IMR-90 (cell line): ENCODE measurements at regions of chr13 and their contacts with region 1.

Region 1: DNA sequence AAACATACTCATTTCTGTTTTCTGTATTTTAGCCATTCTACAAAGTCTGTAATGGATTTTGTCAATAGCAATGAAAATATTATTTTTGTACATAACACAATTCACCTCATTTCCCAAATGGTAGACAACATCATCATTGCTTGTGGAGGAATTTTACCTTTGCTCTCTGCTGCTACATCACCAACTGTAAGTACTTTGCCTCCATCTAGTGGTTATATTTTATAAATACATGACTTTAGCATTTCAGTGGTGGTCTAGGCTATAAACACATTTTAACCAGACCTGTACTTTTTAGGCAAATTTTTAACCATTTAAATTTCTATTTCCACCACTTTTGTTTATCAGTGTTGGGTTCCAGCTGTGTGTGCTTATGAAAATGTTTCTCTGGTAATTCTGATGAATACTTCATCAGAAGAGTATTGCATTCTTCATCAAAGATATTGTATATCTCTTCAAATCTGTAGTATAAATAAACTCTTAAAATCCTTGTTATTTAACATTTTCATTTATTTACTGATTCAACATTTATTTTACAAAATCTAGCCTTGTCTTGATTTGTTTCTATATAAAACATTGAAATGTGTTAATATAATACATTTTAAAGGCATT is 222.4 kb downstream of the NBEA start:
- DNase-seq: peak; percentile 27
- ATAC-seq: peak; percentile 78
- H3K4me3 ChIP-seq: no peak overlapping the region
- H3K27ac ChIP-seq: no peak overlapping the region
- H3K4me1 ChIP-seq: no peaks in the 10 kb centered on the region
- H3K27me3 ChIP-seq: no peaks in the 10 kb centered on the region
- CTCF ChIP-seq: peak; percentile 61
- POLR2A ChIP-seq: 0 out of 2 replicates have a peak, but pooled peaks have one; percentile 17
- RAD21 ChIP-seq: peak; percentile 70

Region 2: DNA sequence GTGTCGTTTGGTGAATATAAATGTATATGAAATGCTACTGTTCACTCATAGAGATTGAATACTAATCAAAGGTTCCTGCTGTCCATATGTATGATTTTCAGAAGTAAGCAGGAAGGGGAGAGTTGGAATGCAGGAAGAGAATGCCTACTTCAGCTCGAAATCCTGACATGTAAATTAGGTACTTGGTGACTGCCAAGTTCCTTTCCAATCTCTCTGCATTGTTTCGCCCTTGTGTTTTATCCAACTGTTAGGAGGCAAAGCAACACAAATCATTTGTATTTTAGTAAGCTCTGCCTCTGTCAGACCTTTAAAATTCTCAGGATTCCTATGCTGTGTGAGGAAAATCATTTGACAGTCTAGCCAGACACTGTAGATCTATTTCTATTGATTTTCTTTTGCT is 1887.9 kb before region 1 on chr13:
- CTCF ChIA-PET with region 1: interaction called, 12 read pairs
- POLR2A ChIA-PET with region 1: no interaction called
- dilution Hi-C with region 1: no loop called
- in situ Hi-C with region 1: no loop called
- intact Hi-C with region 1: no loop called
- DNase-seq: no peak
- ATAC-seq: no peak
- H3K4me3 ChIP-seq: no peak overlapping the region
- H3K27ac ChIP-seq: no peak overlapping the region
- H3K4me1 ChIP-seq: peaks cover 25% of the 10 kb centered on the region
- H3K27me3 ChIP-seq: no peaks in the 10 kb centered on the region
- CTCF ChIP-seq: no peak
- POLR2A ChIP-seq: no peak
- RAD21 ChIP-seq: no peak

Region 3: DNA sequence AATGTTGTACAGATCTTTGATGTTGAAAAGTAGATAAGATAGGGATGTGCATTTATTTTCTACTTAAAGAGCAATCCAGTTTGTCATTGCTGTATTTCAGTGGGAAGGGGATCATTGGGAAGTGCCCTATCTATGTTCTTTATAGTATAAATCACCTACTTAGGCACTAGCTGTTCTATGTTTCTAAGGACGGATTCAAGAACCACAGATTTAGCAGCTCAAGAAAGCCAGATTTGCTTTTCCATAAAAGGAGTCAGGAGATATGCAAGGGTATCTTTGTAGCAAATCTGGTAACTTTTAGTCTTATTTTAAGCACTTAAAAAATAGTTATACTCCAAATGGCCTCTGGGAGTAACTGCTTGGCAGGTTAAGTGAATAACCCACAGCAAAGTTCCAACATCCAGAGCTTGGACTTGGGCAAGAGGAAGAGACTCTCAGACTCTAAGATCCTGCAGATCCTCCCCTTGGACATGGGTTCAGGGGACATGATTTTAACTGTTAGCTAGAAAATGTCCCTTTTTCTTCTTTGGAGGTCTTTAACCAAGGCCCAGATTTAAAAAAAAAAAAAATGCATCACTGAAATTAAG is 943.2 kb after region 1 on chr13:
- CTCF ChIA-PET with region 1: no interaction called
- POLR2A ChIA-PET with region 1: no interaction called
- dilution Hi-C with region 1: no loop called
- in situ Hi-C with region 1: no loop called
- intact Hi-C with region 1: no loop called
- DNase-seq: no peak
- ATAC-seq: no peak
- H3K4me3 ChIP-seq: no peak overlapping the region
- H3K27ac ChIP-seq: no peak overlapping the region
- H3K4me1 ChIP-seq: no peaks in the 10 kb centered on the region
- H3K27me3 ChIP-seq: no peaks in the 10 kb centered on the region
- CTCF ChIP-seq: no peak
- POLR2A ChIP-seq: no peak
- RAD21 ChIP-seq: no peak